PC-9 (cell line): ENCODE measurements at regions of chr20 and their contacts with region 1.

Region 1: DNA sequence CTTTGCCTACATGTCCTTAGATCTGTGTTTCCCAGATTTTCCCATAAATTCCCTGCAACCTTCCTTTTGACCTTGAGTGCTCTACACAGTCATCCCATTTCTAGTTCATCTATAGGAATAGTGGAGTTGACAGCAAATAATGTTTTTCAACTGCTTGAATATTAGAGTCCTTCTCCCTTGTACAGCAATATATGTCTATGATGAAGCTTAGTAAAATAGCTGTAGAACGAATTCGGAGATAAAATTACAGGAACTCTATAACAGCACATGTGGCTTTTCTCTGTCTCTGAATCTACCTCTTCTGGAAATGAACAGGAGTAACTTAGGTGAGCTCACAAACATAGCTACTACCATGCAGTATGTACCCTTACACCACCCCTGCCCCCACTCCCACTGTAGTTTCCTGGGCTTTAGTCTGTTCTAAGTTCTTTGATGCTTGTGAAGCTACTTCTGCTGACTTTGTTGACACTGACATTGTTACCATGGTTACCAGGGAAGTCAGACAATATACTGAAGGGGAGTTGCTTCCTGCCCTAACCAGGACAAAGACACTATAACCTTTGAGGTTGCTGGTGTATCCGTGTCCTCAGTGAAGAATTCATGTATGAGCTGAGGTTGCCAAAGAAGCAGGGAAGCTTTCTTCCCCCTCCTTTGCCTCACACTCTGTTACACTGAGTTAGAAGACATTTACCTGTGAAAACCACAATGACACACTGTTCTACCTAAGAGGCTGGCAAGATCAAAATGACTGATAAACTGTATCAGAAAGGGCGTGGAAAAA is 35.8 kb upstream of the SHLD1 start:
- DNase-seq: peak; percentile 47 to 92
- H3K4me3 ChIP-seq: no peak overlapping the region
- H3K27ac ChIP-seq: no peak overlapping the region
- H3K4me1 ChIP-seq: peaks cover 19% of the 10 kb centered on the region
- H3K27me3 ChIP-seq: no peaks in the 10 kb centered on the region
- CTCF ChIP-seq: no peak

Region 2: DNA sequence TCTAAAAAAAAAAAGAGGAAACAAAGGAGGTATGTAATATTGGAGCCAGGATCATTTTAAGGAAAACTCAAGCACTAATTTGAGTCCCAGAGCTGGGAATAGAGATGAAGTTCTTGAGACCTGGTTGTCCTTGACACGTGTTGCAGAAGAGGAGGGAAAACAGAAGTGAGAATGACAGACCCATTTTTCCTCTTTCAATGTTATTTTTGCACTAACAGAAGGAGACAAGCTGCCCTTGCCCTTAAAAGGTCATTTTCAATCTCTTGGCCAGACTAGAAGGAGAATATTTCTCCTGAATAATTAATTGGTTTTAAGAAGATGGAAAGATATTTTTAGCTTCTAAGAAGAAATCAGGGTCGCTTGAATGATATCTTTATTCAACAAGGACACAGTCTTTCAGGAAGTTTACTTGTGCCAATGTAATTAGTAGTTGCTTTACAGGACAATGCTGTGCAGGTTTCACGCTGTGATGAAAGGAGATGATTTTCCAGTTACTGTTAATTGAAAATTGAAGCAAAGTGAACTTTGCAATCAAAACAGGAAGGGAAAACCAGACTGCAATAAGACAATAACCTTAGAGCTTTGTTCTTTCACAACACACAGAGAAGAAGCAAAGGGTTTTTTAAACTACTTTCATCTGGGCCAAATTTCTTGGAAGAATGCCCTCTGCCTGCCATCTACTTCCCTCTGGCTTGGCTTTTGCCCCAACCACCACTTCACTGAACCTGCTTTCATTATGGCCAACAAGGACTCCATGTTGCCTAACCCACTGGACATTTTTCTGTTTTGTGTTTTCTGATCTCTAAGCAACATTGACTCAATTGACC is 72.1 kb before region 1 on chr20:
- CTCF ChIA-PET with region 1: no interaction called
- POLR2A ChIA-PET with region 1: no interaction called
- intact Hi-C with region 1: loop called (anchors 1 kb)
- DNase-seq: peak in 1 of 2 experiments; percentile 65
- H3K4me3 ChIP-seq: no peak overlapping the region
- H3K27ac ChIP-seq: peak overlapping the region; percentile 54
- H3K4me1 ChIP-seq: peaks cover 42% of the 10 kb centered on the region
- H3K27me3 ChIP-seq: no peaks in the 10 kb centered on the region
- CTCF ChIP-seq: no peak

Region 3: GRCh38 chr20:5674176-5674660 is 40.2 kb before region 1 on chr20:
- CTCF ChIA-PET with region 1: no interaction called
- POLR2A ChIA-PET with region 1: no interaction called
- intact Hi-C with region 1: loop called (anchors 2 kb)
- DNase-seq: peak; percentile 10 to 94
- H3K4me3 ChIP-seq: no peak overlapping the region
- H3K27ac ChIP-seq: peak overlapping the region; percentile 45
- H3K4me1 ChIP-seq: peaks cover 17% of the 10 kb centered on the region
- H3K27me3 ChIP-seq: no peaks in the 10 kb centered on the region
- CTCF ChIP-seq: no peak